ENCODE measurements at regions of chr12 and their contacts with region 1.

Region 1: GRCh38 chr12:121590476-121591143 is 9.8 kb upstream of the KDM2B start:
- DNase-seq: peak in 1 of 2 experiments; percentile 49
- H3K4me3 ChIP-seq: peak overlapping the region in 2 of 4 experiments; percentile 12 to 38; a peak in 3 of 8 replicates
- H3K27ac ChIP-seq: peak overlapping the region; percentile 29; the same call in 1 of the 2 replicates
- H3K4me1 ChIP-seq: peaks cover 2 to 8% (median 8%) of the 10 kb centered on the region in 4 experiments; a peak in 4 of 7 replicates
- H3K27me3 ChIP-seq: no peaks in the 10 kb centered on the region
- CTCF ChIP-seq: no peak
- EP300 ChIP-seq: no peak
- POLR2A ChIP-seq: no peak
- RAD21 ChIP-seq: no peak

Region 2: DNA sequence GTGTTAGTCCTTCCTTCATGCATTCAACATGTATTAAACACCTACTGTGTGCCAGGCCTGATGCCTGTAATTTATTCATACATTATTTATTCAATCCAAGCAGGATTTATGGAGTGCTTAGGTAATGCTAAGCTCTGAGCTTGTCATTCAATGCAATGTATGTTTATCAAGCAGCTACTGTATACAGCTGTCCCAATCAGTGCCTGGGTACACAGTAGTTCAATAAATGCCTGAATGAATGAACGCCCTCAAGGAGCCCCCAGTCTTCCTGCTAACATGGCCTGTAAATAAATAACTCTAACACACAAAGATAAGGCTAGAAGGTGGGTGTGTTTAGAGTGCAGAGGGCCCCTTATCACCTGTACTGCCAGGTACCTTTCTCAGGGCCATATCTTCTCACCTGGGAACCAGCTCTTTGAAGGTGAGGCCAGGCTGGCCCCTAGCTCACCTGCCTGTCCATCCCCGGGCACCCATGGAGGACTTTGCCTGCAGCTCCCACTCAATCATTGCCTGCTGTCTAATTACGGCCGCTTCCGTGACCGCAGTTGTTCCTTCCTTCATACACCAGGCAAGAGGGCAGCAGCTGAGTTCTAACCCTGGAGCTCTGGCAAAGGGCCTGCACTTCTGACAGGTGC is 10.2 kb after region 1 on chr12:
- CTCF ChIA-PET with region 1: interaction called, 3 read pairs
- POLR2A ChIA-PET with region 1: interaction called, 219 read pairs
- DNase-seq: no peak
- H3K4me3 ChIP-seq: no peak overlapping the region
- H3K27ac ChIP-seq: no peak overlapping the region
- H3K4me1 ChIP-seq: no peaks in the 10 kb centered on the region
- H3K27me3 ChIP-seq: no peaks in the 10 kb centered on the region
- CTCF ChIP-seq: no peak
- EP300 ChIP-seq: no peak
- POLR2A ChIP-seq: no peak
- RAD21 ChIP-seq: no peak

Region 3: DNA sequence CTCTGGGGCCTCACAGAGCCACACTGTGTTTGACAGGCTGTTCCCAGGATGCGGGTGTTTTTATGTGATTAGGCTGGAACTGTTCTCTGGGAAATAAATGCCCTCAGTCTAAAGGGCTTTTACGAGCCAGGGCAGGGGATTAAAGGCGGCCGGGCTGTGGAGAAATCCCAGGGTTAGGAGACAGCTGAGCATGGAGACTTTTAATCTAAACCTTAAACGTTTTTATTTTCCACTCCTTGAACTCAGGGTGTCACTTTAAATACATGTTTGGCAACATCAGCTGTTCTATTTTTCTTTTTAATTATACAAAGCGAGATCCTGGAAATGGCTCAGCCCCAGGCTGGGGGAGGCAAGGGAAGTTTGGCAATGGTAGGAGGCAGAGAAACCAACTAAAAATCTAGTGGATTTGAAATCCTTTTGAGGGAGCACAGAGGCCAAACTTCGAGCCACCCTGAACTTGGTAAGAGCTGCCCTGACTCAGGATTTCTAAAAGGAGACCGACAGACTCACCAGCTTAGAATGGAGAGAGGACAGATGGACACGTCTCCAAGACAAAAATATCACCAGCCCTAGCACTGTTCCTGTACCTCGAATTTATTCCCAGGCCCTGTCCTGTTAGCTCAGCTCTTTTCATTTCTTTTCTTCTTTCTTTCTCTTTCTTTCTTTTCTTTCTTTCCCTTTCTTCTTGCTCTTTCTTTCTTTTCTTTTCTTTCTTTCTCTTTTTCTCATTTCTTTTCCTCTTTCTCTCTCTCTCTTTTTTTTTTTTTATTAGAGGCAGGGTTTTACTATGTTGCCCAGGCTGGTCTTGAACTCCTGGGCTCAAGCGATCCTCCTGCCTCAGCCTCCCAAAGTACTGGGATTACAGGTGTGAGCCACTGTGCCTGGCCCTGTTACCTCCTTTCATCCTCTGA is 19.9 kb after region 1 on chr12:
- CTCF ChIA-PET with region 1: interaction called, 12 read pairs
- POLR2A ChIA-PET with region 1: interaction called, 104 read pairs
- DNase-seq: no peak
- H3K4me3 ChIP-seq: no peak overlapping the region
- H3K27ac ChIP-seq: no peak overlapping the region
- H3K4me1 ChIP-seq: peaks cover 0 to 6% (median 1%) of the 10 kb centered on the region in 4 experiments; a peak in 2 of 7 replicates
- H3K27me3 ChIP-seq: no peaks in the 10 kb centered on the region
- CTCF ChIP-seq: no peak
- EP300 ChIP-seq: no peak
- POLR2A ChIP-seq: no peak
- RAD21 ChIP-seq: no peak